Activated naive CD4-positive, alpha-beta T cell treated with anti-CD3 and anti-CD28 coated beads for 36 hours (primary cell): ENCODE measurements at regions of chr19 and their contacts with region 1.

Region 1: GRCh38 chr19:47210689-47211316 is 20.2 kb downstream of the BBC3 start:
- DNase-seq: peak; percentile 94
- H3K4me3 Mint-ChIP-seq: no peak overlapping the region
- H3K27ac Mint-ChIP-seq: peak overlapping the region; percentile 93
- H3K4me1 Mint-ChIP-seq: peaks cover 14% of the 10 kb centered on the region
- H3K27me3 Mint-ChIP-seq: no peaks in the 10 kb centered on the region

Region 2: DNA sequence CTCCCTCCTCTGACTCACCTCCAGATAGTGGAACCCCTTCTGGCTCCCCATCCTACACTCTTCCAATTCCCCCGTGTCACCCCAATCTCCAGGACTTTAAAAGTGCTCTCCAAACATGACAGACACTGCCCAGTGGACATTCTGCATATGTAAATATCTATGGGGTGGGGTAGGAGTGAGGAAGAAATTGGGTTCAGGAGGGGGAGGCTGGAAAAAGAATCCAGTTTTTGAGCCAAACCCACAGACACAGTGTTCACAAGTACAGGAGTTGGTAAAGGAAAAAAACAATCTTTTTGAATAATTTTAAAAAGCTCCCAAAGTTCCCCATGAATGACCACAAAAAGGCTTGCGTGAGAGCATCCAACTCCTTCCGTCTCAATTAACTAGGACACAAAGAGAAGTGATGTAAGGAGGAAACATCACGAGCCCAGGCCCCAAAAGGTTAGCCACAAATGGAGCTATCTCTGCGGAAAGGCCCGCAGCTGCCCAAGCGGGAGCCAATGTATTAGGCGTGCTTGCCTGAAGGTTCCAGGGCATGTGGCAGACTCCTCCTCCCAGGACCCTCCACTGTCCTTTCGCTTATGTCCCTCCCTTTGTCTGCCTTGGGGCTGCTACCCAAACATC is 115.2 kb before region 1 on chr19:
- CTCF ChIA-PET with region 1: no interaction called
- intact Hi-C with region 1: no loop called
- DNase-seq: no peak
- H3K4me3 Mint-ChIP-seq: peak overlapping the region; percentile 20
- H3K27ac Mint-ChIP-seq: peak overlapping the region; percentile 94
- H3K4me1 Mint-ChIP-seq: peaks cover 56% of the 10 kb centered on the region
- H3K27me3 Mint-ChIP-seq: no peaks in the 10 kb centered on the region

Region 3: DNA sequence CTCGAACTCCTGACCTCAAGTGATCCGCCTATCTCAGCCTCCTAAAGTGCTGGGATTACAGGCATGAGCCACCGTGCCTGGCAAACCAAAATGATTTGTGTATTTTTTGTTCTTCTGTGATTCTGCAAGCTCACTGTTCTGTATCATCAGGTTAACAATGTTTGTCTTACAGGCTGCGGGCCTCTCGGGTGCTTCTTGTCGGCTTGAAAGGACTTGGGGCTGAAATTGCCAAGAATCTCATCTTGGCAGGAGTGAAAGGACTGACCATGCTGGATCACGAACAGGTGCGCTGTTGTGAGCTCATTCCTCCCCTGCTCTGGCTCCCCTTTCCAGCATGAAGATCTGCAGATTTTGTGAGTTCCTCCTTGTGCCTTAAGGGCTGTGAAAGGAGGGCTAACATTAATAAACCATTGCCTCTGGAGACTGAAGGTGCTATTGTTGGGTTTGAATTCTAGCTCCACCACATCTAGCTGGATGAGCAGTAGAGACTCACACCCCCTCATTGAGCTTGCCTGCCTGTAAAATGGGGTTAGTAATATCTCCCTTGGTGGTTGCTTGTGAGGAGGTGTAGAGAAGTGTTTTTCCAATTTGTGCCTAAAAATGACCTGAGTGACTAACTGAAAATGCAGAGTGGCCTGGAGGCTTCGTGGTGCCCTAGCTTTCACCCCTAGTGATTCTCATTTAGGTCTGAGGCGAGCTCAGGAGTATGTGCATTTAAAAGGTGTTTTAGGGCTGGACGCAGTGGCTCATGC is 67.3 kb before region 1 on chr19:
- CTCF ChIA-PET with region 1: interaction called, 27 read pairs
- intact Hi-C with region 1: no loop called
- DNase-seq: no peak
- H3K4me3 Mint-ChIP-seq: no peak overlapping the region
- H3K27ac Mint-ChIP-seq: peak overlapping the region; percentile 39
- H3K4me1 Mint-ChIP-seq: peaks cover 76% of the 10 kb centered on the region
- H3K27me3 Mint-ChIP-seq: no peaks in the 10 kb centered on the region

Region 4: DNA sequence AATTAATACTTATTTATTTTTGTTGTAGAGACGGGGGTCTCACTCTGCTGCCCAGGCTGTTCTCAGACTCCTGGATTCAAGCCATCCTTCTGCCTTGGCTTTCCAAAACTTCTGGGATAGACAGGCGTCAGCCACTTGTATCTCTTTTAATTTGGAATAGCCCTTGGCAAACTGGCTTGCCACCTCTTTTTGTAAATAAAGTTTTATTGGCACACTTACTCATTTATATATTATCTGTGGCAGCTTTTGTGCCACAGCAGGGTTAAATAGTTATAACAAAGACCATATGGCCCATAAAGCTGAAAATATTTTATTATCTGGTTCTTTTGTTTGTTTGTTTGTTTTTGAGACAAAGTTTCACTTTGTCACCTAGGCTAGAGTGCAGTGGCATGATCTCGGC is 10.3 kb before region 1 on chr19:
- CTCF ChIA-PET with region 1: interaction called, 14 read pairs
- intact Hi-C with region 1: no loop called
- DNase-seq: no peak
- H3K4me3 Mint-ChIP-seq: no peak overlapping the region
- H3K27ac Mint-ChIP-seq: no peak overlapping the region
- H3K4me1 Mint-ChIP-seq: peaks cover 18% of the 10 kb centered on the region
- H3K27me3 Mint-ChIP-seq: no peaks in the 10 kb centered on the region

Region 5: GRCh38 chr19:47391510-47392223 is 180.9 kb after region 1 on chr19:
- CTCF ChIA-PET with region 1: no interaction called
- intact Hi-C with region 1: no loop called
- DNase-seq: peak; percentile 91
- H3K4me3 Mint-ChIP-seq: no peak overlapping the region
- H3K27ac Mint-ChIP-seq: no peak overlapping the region
- H3K4me1 Mint-ChIP-seq: peaks cover 2% of the 10 kb centered on the region
- H3K27me3 Mint-ChIP-seq: peaks cover 2% of the 10 kb centered on the region